A549 (cell line): ENCODE measurements at regions of chr19 and their contacts with region 1.

Region 1: GRCh38 chr19:4208385-4209094 is 20.8 kb upstream of the EBI3 start:
- DNase-seq: peak; percentile 55 to 62
- ATAC-seq: peak; percentile 65 to 69; a peak in 5 of 6 replicates
- H3K4me3 ChIP-seq: no peak overlapping the region
- H3K27ac ChIP-seq: peak overlapping the region; percentile 63 to 84
- H3K4me1 ChIP-seq: peaks cover 25% of the 10 kb centered on the region
- CTCF ChIP-seq: peak; percentile 58
- EP300 ChIP-seq: no peak
- POLR2A ChIP-seq: no peak
- RAD21 ChIP-seq: peak; percentile 48 to 49; a peak in 4 of 5 replicates

Region 2: GRCh38 chr19:3984908-3985642 is 223.5 kb before region 1 on chr19 and contains the start of gene EEF2:
- CTCF ChIA-PET with region 1: interaction called, 20 read pairs
- POLR2A ChIA-PET with region 1: interaction called, 5 read pairs
- DNase-seq: peak; percentile 60 to 85
- ATAC-seq: peak; percentile 25 to 49; a peak in 4 of 6 replicates
- H3K4me3 ChIP-seq: peak within 1 kb of the TSS; percentile 96
- H3K27ac ChIP-seq: peak within 1 kb of the TSS; percentile 83 to 97
- H3K4me1 ChIP-seq: peaks cover 26% of the 10 kb centered on the region; the same call in 2 of the 3 replicates
- CTCF ChIP-seq: no peak
- EP300 ChIP-seq: no peak
- POLR2A ChIP-seq: peak; percentile 98
- RAD21 ChIP-seq: no peak
- polyA plus RNA-seq, gene EEF2: 526 and 680 TPM in 2 replicates

Region 3: GRCh38 chr19:4187313-4188122 is 21.0 kb before region 1 on chr19:
- CTCF ChIA-PET with region 1: interaction called, 11 read pairs
- POLR2A ChIA-PET with region 1: no interaction called
- DNase-seq: no peak
- ATAC-seq: no peak
- H3K4me3 ChIP-seq: no peak overlapping the region
- H3K27ac ChIP-seq: no peak overlapping the region
- H3K4me1 ChIP-seq: peaks cover 3% of the 10 kb centered on the region; the same call in 1 of the 3 replicates
- CTCF ChIP-seq: no peak
- EP300 ChIP-seq: no peak
- POLR2A ChIP-seq: no peak
- RAD21 ChIP-seq: no peak

Region 4: GRCh38 chr19:4232958-4233853 is 24.7 kb after region 1 on chr19:
- CTCF ChIA-PET with region 1: interaction called, 15 read pairs
- POLR2A ChIA-PET with region 1: no interaction called
- DNase-seq: peak in 1 of 2 experiments; percentile 49
- ATAC-seq: peak; percentile 58 to 80
- H3K4me3 ChIP-seq: no peak overlapping the region
- H3K27ac ChIP-seq: peak overlapping the region in 1 of 2 experiments; percentile 68; a peak in 3 of 6 replicates
- H3K4me1 ChIP-seq: peaks cover 14% of the 10 kb centered on the region
- CTCF ChIP-seq: peak; percentile 56
- EP300 ChIP-seq: no peak
- POLR2A ChIP-seq: no peak
- RAD21 ChIP-seq: no peak